ENCODE measurements at regions of chr3 and their contacts with region 1.

Region 1: DNA sequence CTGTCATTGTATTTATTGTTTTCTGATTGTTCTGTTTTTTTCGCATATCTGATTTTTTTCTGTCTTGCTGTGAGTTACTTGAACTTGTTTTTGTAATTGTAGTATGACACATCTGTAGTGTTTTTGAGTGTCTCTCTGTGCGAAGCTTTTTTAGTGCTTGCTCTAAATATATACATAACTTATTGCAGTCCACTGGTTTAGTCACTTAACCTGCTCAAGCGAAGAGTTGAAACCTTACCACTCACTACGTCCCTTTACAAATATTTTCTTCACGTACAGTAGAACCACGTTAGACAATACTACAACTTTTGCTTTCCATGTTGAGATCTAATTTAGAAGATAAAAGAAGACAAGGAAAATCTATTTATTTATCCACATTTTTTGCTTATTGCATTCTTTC is 713.0 kb upstream of the GRM7 start:
- DNase-seq: no peak
- H3K4me3 ChIP-seq: no peak overlapping the region
- H3K27ac ChIP-seq: no peak overlapping the region
- H3K4me1 ChIP-seq: no peaks in the 10 kb centered on the region
- H3K27me3 ChIP-seq: no peaks in the 10 kb centered on the region
- CTCF ChIP-seq: no peak
- POLR2A ChIP-seq: no peak

Region 2: DNA sequence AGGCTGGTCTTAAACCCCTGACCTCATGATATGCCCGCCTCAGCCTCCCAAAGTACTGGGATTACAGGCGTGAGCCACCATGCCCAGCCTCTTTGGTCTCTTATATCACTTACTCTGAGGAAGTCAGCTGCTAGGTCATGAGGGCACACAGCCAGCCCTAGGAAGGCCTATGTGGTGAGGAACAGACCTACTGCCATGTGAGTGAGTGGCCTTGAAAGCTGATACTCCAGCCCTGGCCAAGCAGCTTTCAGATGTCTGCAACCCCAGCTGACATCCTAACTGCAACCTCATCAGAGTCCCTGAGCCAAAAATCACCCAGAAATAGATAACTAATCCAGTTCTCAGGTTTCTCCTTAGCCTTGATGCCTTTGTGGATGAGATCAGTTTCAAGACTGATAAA is 736.1 kb before region 1 on chr3:
- CTCF ChIA-PET with region 1: no interaction called
- POLR2A ChIA-PET with region 1: no interaction called
- dilution Hi-C with region 1: no loop called
- intact Hi-C with region 1: no loop called
- DNase-seq: no peak
- H3K4me3 ChIP-seq: no peak overlapping the region
- H3K27ac ChIP-seq: no peak overlapping the region
- H3K4me1 ChIP-seq: no peaks in the 10 kb centered on the region
- H3K27me3 ChIP-seq: no peaks in the 10 kb centered on the region
- CTCF ChIP-seq: no peak
- POLR2A ChIP-seq: no peak

Region 3: DNA sequence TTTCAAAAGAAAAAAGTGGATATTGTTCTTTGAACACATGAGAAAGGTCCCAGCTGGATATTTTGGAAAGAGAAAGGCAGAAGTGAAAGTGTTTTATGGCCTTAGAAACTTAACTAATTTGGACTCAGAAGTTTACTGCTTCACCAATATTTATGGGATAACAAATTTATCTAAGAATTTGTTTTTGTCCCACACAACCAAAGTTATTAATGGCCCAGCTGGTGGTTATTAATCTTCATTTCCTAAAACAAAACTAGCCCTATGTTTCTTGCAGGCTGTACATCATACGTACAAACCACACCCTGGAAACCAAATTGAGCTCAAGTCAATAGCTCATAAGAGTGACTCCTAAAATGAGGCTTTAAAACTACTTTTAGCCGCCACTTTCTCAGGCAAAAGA is 1980.8 kb after region 1 on chr3:
- CTCF ChIA-PET with region 1: no interaction called
- POLR2A ChIA-PET with region 1: no interaction called
- dilution Hi-C with region 1: no loop called
- intact Hi-C with region 1: loop called (anchors 5 kb)
- DNase-seq: no peak
- H3K4me3 ChIP-seq: no peak overlapping the region
- H3K27ac ChIP-seq: no peak overlapping the region
- H3K4me1 ChIP-seq: no peaks in the 10 kb centered on the region
- H3K27me3 ChIP-seq: no peaks in the 10 kb centered on the region
- CTCF ChIP-seq: no peak
- POLR2A ChIP-seq: no peak